Heart left ventricle (tissue), 16 donors: ENCODE measurements at regions of chr13 and their contacts with region 1.

Region 1: GRCh38 chr13:46160471-46161066 is 21.4 kb downstream of the LCP1 start:
- DNase-seq: no peak
- ATAC-seq: peak in 3 of 4 donors; percentile 48 to 64 (median 55)
- H3K4me3 ChIP-seq: no peak overlapping the region
- H3K27ac ChIP-seq: peak overlapping the region in 1 of 12 donors; percentile 64
- H3K4me1 ChIP-seq: peaks cover 0 to 46% (median 0%) of the 10 kb centered on the region in 12 donors
- H3K27me3 ChIP-seq: peaks cover 0 to 15% (median 0%) of the 10 kb centered on the region in 9 donors
- CTCF ChIP-seq: peak; percentile 61 to 87 (median 72)
- POLR2A ChIP-seq: no peak

Region 2: DNA sequence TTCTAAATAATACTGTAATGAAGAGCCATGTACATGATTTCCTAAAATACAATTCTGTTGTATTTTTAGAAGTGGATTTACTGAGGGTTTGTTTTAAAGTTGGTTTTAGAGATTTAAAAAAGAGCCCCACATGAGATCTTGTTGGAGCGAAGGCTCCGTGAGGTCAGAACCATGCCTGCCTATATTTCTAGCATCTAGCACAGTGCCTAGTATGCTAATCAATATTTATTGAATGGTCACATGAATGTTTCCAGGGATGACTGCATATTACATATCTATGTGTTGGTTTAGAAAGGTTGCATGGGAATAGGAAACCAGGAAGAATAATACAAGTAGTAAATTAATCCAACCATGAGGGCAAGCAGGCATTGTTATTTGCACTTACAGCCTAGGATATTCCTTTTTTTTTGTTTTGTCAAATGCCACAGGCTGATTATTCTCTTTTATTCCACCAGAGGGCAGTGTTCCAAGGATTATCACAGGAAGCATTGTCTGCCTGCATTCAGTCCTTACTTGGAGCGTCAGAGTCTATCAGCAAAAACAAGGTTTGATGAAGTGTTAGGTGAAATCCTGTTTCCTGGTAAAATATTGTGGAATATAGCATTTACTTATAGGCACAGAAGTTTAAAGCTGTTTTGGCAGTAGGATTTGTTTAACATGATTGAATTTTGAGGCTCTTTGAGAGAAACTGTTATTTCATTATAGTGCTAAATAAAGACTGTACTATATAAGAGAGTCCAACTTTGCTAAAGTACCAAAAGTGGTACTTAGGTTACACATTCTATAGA is 649.1 kb before region 1 on chr13:
- intact Hi-C with region 1: loop called in 1 of 10 experiments (anchors 2 kb)
- DNase-seq: peak in 1 of 5 donors; percentile 13
- ATAC-seq: peak; percentile 32 to 76 (median 59)
- H3K4me3 ChIP-seq: no peak overlapping the region
- H3K27ac ChIP-seq: no peak overlapping the region
- H3K4me1 ChIP-seq: peaks cover 0 to 6% (median 0%) of the 10 kb centered on the region in 12 donors
- H3K27me3 ChIP-seq: no peaks in the 10 kb centered on the region
- CTCF ChIP-seq: peak; percentile 81 to 95 (median 90)
- POLR2A ChIP-seq: no peak

Region 3: GRCh38 chr13:46113596-46113995 is 47.0 kb before region 1 on chr13:
- intact Hi-C with region 1: no loop called
- DNase-seq: no peak
- ATAC-seq: no peak
- H3K4me3 ChIP-seq: no peak overlapping the region
- H3K27ac ChIP-seq: no peak overlapping the region
- H3K4me1 ChIP-seq: no peaks in the 10 kb centered on the region
- H3K27me3 ChIP-seq: peaks cover 0 to 10% (median 0%) of the 10 kb centered on the region in 9 donors
- CTCF ChIP-seq: no peak
- POLR2A ChIP-seq: no peak

Region 4: DNA sequence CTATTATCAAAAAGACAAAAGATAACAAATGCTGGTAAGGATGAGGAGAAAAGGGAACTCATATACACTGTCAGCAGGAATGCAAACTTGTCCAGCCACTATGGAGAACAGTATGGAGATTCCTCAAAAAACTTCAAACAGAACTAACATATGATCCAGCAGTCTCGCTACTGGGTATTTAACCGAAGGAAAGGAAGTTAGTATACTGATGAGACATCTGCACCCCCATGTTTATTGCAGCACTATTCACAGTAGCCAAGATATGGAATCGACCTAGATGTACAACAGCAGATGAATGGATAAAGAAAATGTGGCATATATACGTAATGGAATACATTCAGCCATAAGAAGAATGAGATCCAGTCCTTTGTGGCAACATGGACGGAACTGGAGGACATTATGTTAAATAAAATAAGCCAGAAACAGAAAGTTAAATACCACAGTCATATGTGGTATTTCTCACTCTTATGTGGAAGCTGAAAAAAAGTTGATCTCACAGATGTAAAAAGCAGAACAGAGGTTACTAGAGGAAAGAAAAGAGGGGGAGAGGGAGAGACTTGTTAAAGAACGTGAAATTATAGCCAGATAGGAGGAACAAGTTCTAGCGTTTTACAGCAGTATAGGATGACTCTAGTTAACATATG is 143.3 kb after region 1 on chr13:
- intact Hi-C with region 1: no loop called
- DNase-seq: no peak
- ATAC-seq: no peak
- H3K4me3 ChIP-seq: no peak overlapping the region
- H3K27ac ChIP-seq: peak overlapping the region in 1 of 12 donors; percentile 59
- H3K4me1 ChIP-seq: peaks cover 0 to 14% (median 0%) of the 10 kb centered on the region in 12 donors
- H3K27me3 ChIP-seq: no peaks in the 10 kb centered on the region
- CTCF ChIP-seq: no peak
- POLR2A ChIP-seq: no peak